ENCODE measurements at regions of chr1 and their contacts with region 1.

Region 1: DNA sequence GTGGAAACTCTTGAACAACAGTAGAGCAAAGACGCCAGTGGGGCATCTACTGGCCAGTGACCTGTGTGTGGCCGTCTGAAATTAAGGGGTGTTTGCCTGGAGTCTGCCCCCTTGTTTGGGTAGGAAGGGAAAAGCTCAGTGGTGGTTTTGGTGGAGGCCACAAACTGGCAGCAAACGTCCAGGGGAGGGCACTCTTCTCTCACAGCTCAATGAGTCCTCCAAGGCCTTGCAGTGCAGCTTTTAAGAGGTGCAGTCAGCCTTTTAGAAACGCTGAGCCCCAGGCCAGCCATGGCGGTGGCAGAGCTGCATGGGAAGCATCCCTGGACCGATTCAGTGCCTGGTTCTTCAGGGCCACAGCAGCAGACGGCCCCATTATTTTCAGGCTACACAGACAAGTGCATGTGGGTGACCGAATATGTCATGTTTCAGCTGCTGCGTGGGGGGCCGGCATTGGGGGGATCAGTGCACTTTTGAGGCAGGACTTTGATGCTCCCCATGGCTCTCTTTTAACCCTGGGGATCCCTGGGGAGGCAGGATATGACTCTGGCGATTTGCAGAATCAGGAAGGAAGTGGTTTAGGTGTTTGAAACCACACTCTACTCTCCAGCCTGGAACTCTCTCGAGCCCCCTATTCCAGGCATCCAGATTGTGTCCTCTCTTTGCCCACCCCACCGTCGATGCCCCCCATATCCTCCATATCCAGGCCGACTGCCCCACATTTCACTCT is 414.0 kb downstream of the PRDM2 start:
- DNase-seq: peak; percentile 19
- H3K4me3 ChIP-seq: no peak overlapping the region
- H3K27ac ChIP-seq: no peak overlapping the region
- H3K4me1 ChIP-seq: no peaks in the 10 kb centered on the region
- H3K27me3 ChIP-seq: no peaks in the 10 kb centered on the region
- CTCF ChIP-seq: peak in 4 of 5 experiments; percentile 20 to 40 (median 29)
- EP300 ChIP-seq: no peak
- POLR2A ChIP-seq: no peak

Region 2: DNA sequence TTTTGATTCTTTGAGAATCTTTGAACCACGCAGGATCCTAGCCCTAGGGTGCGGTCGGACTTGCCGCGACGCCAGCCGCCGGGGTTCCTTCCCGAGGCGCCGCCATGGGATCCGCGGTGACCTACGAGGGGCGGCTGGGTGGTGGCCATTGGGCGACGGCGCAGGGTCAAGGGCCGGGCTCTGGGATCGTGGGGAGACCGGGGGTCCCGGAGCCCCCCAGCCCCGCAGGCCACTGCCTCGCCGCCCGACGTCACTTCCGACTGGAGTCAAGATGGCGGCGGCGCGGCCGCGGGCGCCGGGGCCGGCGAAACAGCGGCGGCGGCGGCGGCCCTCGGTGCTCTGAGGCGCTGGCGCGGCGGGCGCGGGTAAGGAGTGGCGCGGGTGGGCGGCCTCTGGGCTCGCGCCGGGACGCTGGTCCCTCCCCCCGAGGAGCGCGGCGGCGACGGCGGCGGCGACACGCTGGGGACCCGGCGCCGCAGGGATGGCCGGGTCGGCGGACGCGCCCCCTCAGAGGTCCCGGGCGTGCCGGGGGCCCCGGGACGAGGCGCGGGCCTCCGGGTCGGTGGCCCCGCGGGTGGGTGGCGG is 414.0 kb before region 1 on chr1 and contains the start of gene PRDM2:
- in situ Hi-C with region 1: no loop called
- intact Hi-C with region 1: no loop called
- DNase-seq: peak; percentile 53
- H3K4me3 ChIP-seq: peak within 1 kb of the TSS; percentile 74 to 91 (median 86)
- H3K27ac ChIP-seq: peak within 1 kb of the TSS; percentile 90 to 95 (median 91)
- H3K4me1 ChIP-seq: peaks cover 5 to 24% (median 9%) of the 10 kb centered on the region in 4 donors
- H3K27me3 ChIP-seq: peaks cover 5% of the 10 kb centered on the region
- CTCF ChIP-seq: no peak
- EP300 ChIP-seq: no peak
- POLR2A ChIP-seq: no peak
- total RNA-seq, gene PRDM2: 27.3 to 40.5 (median 35.8) TPM

Region 3: DNA sequence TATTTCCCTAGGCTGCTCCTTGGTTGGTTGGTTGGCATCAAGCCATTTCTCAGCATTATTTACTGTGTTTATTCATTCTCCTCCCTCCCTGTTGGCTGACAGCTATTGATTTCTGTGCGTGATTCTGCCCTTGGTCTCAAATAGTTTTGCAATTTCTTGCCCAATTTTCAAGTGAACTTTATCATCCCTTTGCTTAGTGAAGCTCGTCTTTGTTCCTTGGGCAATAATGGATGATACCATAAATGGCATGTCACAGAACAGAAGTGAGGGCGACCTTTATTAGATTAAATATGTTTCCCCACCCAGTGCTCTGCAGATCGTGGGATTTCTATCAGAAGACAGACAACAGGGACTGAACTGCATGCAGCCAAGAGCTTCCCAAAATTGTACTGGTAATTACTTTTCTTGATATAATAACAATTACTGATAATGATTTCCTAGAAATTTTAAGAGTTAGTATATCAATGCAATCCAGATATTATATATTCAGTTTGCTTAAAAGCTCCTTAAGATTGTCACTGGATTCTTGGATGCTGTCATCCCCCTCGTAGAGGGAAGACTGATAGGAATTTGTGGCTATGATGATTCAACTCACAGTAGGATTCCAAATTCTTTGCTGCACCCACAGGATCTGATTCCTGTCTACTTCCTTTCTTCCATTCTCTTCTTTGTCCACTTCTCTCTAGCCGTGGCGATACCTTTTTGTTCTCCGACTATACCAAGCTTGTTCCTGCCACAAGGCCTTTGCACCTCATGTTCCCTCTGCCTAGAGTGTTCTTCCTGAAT is 362.4 kb after region 1 on chr1:
- in situ Hi-C with region 1: no loop called
- intact Hi-C with region 1: no loop called
- DNase-seq: no peak
- H3K4me3 ChIP-seq: no peak overlapping the region
- H3K27ac ChIP-seq: no peak overlapping the region
- H3K4me1 ChIP-seq: no peaks in the 10 kb centered on the region
- H3K27me3 ChIP-seq: no peaks in the 10 kb centered on the region
- CTCF ChIP-seq: no peak
- EP300 ChIP-seq: no peak
- POLR2A ChIP-seq: no peak

Region 4: GRCh38 chr1:14724246-14724645 is 610.2 kb after region 1 on chr1:
- in situ Hi-C with region 1: loop called in 2 of 4 experiments (anchors 25 kb)
- intact Hi-C with region 1: no loop called
- DNase-seq: no peak
- H3K4me3 ChIP-seq: no peak overlapping the region
- H3K27ac ChIP-seq: no peak overlapping the region
- H3K4me1 ChIP-seq: no peaks in the 10 kb centered on the region
- H3K27me3 ChIP-seq: no peaks in the 10 kb centered on the region
- CTCF ChIP-seq: no peak
- EP300 ChIP-seq: no peak
- POLR2A ChIP-seq: no peak

Region 5: DNA sequence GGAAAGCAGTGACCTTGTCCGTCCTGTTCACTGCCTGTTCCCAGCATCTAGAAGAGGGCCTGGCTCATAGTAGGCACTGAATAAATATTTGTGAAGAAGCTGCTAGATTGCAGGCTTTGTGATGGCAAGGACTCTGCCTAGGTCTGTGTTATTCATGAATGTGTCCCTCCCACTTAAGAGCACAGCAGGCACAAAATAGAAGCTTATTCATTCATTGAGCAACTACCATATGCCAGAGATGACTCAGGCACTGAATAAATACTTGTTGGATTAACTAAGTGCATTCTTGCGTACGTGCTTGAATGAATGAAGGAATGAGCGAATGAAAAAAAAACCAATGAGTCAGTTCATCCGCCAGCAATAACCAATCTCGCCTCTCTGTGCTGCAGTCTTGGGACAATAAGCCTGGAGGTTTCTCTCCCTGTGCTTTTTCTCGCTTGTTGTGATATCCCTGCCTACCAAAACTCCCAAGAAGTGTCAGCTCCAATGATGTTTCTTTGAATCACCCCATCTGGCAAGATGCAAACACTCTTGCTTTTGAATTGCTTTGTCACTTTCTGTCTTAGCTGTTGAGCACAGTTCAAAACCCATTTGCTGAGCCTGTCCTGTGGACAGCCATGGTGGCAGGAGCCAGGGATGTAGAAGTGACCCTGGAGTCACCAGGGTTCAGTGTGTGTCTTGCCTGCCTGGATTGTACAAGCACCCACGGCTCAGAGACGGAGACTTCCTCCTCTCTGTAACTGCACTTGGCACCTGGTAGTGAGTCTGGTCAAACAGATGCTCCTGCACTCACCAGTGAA is 628.4 kb after region 1 on chr1:
- in situ Hi-C with region 1: loop called in 1 of 4 experiments (anchors 25 kb)
- intact Hi-C with region 1: no loop called
- DNase-seq: no peak
- H3K4me3 ChIP-seq: no peak overlapping the region
- H3K27ac ChIP-seq: no peak overlapping the region
- H3K4me1 ChIP-seq: no peaks in the 10 kb centered on the region
- H3K27me3 ChIP-seq: no peaks in the 10 kb centered on the region
- CTCF ChIP-seq: no peak
- EP300 ChIP-seq: no peak
- POLR2A ChIP-seq: no peak